GM12878 (cell line): ENCODE measurements at regions of chr5 and their contacts with region 1.

Region 1: GRCh38 chr5:170411100-170411499 is 21.9 kb upstream of the KCNMB1 start:
- DNase-seq: no peak
- ATAC-seq: peak; percentile 92
- H3K4me3 ChIP-seq: no peak overlapping the region
- H3K27ac ChIP-seq: no peak overlapping the region
- H3K4me1 ChIP-seq: no peaks in the 10 kb centered on the region
- H3K27me3 ChIP-seq: no peaks in the 10 kb centered on the region; a peak in 1 of 4 replicates
- CTCF ChIP-seq: peak; percentile 35 to 65 (median 49); a peak in 5 of 6 replicates
- EP300 ChIP-seq: no peak
- POLR2A ChIP-seq: no peak
- RAD21 ChIP-seq: no peak

Region 2: GRCh38 chr5:170388818-170389549 is 22.1 kb before region 1 on chr5 and contains the start of gene KCNMB1:
- CTCF ChIA-PET with region 1: interaction called, 10 read pairs
- POLR2A ChIA-PET with region 1: interaction called, 3 read pairs
- RAD21 ChIA-PET with region 1: interaction called, 5 read pairs
- SMC1A ChIA-PET with region 1: interaction called, 7 read pairs
- in situ Hi-C with region 1: no loop called
- intact Hi-C with region 1: no loop called
- DNase-seq: no peak
- ATAC-seq: peak; percentile 57
- H3K4me3 ChIP-seq: peak within 1 kb of the TSS; percentile 5; the same call in 1 of the 2 replicates
- H3K27ac ChIP-seq: peak within 1 kb of the TSS; percentile 22; the same call in 1 of the 2 replicates
- H3K4me1 ChIP-seq: peaks cover 20% of the 10 kb centered on the region
- H3K27me3 ChIP-seq: no peaks in the 10 kb centered on the region
- CTCF ChIP-seq: no peak
- EP300 ChIP-seq: no peak
- POLR2A ChIP-seq: no peak
- RAD21 ChIP-seq: no peak
- polyA plus RNA-seq, gene KCNMB1: 2.3 to 2.8 TPM